Aorta (tissue), 5 donors: ENCODE measurements at regions of chr5 and their contacts with region 1.

Region 1: DNA sequence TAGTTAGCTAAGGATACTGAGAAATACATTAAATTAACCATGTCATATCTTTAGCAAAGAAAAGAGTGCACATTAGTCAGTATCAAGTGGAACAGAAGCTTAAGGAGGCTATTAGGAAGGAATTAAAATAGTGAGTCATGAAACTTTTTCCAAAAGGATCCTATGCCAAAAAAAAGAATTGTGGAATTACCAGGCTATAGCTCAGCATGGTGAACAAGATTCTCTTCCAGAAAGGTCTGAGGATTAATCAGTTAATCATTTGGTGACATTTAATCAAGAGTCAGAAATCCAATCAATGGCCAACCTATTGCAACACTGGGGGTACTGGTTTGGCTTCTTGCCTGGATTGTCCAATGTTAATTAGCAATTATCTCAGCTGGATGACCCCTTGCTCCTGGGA is 244.5 kb upstream of the NMUR2 start:
- DNase-seq: no peak
- ATAC-seq: peak; percentile 15
- H3K4me3 ChIP-seq: no peak overlapping the region
- H3K27ac ChIP-seq: no peak overlapping the region
- H3K4me1 ChIP-seq: no peaks in the 10 kb centered on the region
- H3K27me3 ChIP-seq: no peaks in the 10 kb centered on the region

Region 2: GRCh38 chr5:152688561-152689249 is 39.1 kb after region 1 on chr5:
- intact Hi-C with region 1: loop called in 1 of 2 experiments (anchors 5 kb)
- DNase-seq: peak; percentile 54 to 57
- ATAC-seq: peak; percentile 77
- H3K4me3 ChIP-seq: no peak overlapping the region
- H3K27ac ChIP-seq: no peak overlapping the region
- H3K4me1 ChIP-seq: peaks cover 2 to 6% of the 10 kb centered on the region in 2 donors
- H3K27me3 ChIP-seq: no peaks in the 10 kb centered on the region